ENCODE measurements at regions of chr2 and their contacts with region 1.

Region 1: GRCh38 chr2:216698895-216699294 is 3.5 kb upstream of the IGFBP5 start:
- DNase-seq: no peak
- H3K4me3 ChIP-seq: no peak overlapping the region
- CTCF ChIP-seq: peak; percentile 73

Region 2: GRCh38 chr2:217166241-217166850 is 467.5 kb after region 1 on chr2:
- in situ Hi-C with region 1: loop called (anchors 5 kb)
- DNase-seq: peak; percentile 13
- H3K4me3 ChIP-seq: no peak overlapping the region
- CTCF ChIP-seq: peak; percentile 54

Region 3: GRCh38 chr2:217491271-217491670 is 792.4 kb after region 1 on chr2:
- in situ Hi-C with region 1: loop called (anchors 10 kb)
- DNase-seq: no peak
- H3K4me3 ChIP-seq: no peak overlapping the region
- CTCF ChIP-seq: no peak

Region 4: GRCh38 chr2:217510771-217511291 is 811.9 kb after region 1 on chr2:
- in situ Hi-C with region 1: loop called (anchors 5 kb)
- DNase-seq: peak; percentile 84
- H3K4me3 ChIP-seq: no peak overlapping the region
- CTCF ChIP-seq: peak; percentile 74

Measured in astrocyte of the cerebellum (primary cell).